ENCODE measurements at regions of chr2 and their contacts with region 1.

Region 1: DNA sequence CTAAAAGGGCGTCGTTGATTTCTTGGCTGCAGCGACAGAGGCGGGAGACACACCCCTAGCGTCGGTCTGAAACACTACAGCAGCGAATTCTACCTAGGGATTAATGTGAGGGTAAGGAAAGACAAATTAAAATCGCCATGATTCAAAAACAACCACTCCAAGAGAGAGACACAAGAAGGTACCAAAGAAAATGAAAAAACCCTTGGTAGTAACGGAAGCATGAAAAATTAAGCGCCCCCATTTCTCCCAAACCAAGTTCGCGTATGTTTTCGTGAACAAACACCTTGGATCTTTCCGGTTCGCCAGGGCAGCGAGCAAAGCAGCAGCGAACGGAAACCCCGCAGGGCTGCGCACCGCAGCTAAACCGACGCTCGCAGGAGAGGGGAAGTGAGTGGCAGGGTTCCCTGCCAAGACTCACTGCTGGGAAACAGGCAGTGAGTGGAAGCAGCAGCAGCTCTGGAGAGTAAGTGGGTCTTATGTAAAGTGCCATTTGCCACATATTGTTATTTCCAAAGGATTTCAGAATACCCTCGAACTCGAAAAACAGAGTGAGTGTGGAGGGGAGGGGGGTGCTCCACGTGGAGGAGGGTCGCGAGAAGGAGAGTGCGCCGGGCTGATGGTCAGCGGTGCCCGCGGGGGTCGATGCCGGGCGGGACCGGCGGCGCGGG is 1.0 kb downstream of the PPP3R1 start:
- DNase-seq: peak; percentile 92
- H3K4me3 Mint-ChIP-seq: peak overlapping the region; percentile 92
- H3K27ac Mint-ChIP-seq: peak overlapping the region; percentile 99
- H3K4me1 Mint-ChIP-seq: peaks cover 37% of the 10 kb centered on the region
- H3K27me3 Mint-ChIP-seq: peaks cover 4% of the 10 kb centered on the region

Region 2: GRCh38 chr2:67397143-67397986 is 854.0 kb before region 1 on chr2 and contains the start of gene ETAA1:
- intact Hi-C with region 1: loop called (anchors 5 kb)
- DNase-seq: peak; percentile 98
- H3K4me3 Mint-ChIP-seq: peak within 1 kb of the TSS; percentile 97
- H3K27ac Mint-ChIP-seq: peak within 1 kb of the TSS; percentile 97
- H3K4me1 Mint-ChIP-seq: peaks cover 8% of the 10 kb centered on the region
- H3K27me3 Mint-ChIP-seq: peaks cover 2% of the 10 kb centered on the region
- total RNA-seq, gene ETAA1: 10.8 and 12.0 TPM in 2 replicates

Region 3: DNA sequence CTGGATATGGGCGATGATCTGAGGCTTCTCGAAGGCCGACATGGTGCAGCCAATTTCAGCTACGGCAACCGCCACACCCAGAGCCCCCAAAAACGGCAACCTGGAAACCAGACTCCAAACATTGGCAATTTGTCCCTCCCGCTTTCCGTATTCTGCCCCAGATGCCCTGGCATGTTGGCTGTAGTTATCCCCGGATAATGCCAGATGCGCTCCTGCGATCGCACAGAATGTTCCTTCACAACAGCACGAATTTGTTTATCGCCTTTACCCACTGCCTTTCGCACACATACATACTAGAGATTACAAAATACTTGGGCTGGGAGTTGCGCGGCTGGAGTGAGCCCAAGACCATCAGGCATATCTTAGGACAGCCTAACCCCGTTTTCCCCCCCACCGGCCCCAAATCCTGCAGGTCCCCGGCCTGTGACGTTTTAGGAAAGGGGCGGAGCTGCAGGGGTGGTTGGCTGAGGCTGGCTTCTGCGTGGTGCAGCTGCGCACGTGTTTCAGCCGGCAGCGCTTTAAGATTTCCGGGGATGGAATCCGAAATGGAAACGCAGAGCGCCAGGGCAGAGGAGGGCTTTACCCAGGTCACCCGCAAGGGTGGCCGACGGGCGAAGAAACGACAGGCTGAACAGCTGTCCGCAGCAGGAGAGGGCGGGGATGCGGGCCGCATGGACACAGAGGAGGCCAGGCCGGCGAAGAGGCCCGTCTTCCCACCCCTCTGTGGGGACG is 93.8 kb before region 1 on chr2 and contains the start of gene PNO1:
- intact Hi-C with region 1: loop called (anchors 1 kb)
- DNase-seq: peak; percentile 99
- H3K4me3 Mint-ChIP-seq: peak within 1 kb of the TSS; percentile 98
- H3K27ac Mint-ChIP-seq: peak within 1 kb of the TSS; percentile 99
- H3K4me1 Mint-ChIP-seq: peaks cover 26% of the 10 kb centered on the region
- H3K27me3 Mint-ChIP-seq: no peaks in the 10 kb centered on the region
- total RNA-seq, gene PNO1: 35.4 and 38.4 TPM in 2 replicates

Region 4: GRCh38 chr2:68238955-68239822 is 12.1 kb before region 1 on chr2:
- intact Hi-C with region 1: loop called (anchors 1 kb)
- DNase-seq: no peak
- H3K4me3 Mint-ChIP-seq: peak overlapping the region; percentile 14
- H3K27ac Mint-ChIP-seq: peak overlapping the region; percentile 68
- H3K4me1 Mint-ChIP-seq: peaks cover 47% of the 10 kb centered on the region
- H3K27me3 Mint-ChIP-seq: no peaks in the 10 kb centered on the region

Region 5: GRCh38 chr2:68295516-68295915 is 44.2 kb after region 1 on chr2:
- intact Hi-C with region 1: no loop called
- DNase-seq: no peak
- H3K4me3 Mint-ChIP-seq: no peak overlapping the region
- H3K27ac Mint-ChIP-seq: no peak overlapping the region
- H3K4me1 Mint-ChIP-seq: no peaks in the 10 kb centered on the region
- H3K27me3 Mint-ChIP-seq: peaks cover 13% of the 10 kb centered on the region

Region 6: DNA sequence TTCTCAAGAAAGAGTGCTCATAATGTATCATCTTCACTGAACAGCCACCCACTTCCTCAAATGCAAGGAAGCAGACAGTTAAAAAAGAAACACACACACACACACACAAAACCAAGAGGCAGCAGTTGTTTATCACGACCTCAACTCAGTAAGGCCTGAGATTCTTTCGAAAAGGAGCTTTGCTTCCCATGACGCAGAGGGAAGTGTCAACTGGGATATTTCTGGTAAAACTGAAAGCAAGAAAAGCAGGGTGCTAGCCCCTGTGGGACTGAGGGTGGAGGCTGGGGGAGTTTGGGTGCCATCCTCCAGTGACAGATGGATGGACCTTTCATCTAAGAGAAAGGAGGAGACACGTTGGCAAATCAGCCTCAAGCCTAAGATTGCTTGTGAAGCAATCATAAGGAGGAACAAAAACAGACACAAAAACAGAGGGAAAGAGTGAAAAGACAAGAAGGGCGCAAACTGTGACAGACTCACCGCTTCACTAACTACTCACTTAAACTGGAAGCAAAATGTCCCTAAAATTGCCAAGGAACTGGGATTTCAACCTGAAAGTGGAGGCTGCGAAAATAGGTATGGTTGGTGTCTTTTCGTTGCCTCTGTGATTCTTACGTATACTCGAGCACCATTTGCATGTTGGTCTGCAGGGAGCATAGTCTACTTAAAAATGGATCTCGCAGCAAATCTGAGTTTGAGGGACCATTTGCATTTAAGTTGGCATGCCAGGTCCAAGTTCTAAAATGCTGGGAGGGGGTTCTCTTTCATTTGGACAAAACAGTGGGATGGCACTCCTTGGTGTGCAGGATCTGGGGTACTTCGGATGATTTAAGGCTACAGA is 483.6 kb after region 1 on chr2 and contains the start of gene ARHGAP25:
- intact Hi-C with region 1: loop called (anchors 10 kb)
- DNase-seq: peak; percentile 89
- H3K4me3 Mint-ChIP-seq: no peak within 1 kb of the TSS
- H3K27ac Mint-ChIP-seq: no peak within 1 kb of the TSS
- H3K4me1 Mint-ChIP-seq: peaks cover 41% of the 10 kb centered on the region
- H3K27me3 Mint-ChIP-seq: no peaks in the 10 kb centered on the region
- total RNA-seq, gene ARHGAP25: 37.8 and 42.2 TPM in 2 replicates

Measured in activated CD4-positive, alpha-beta T cell treated with anti-CD3 and anti-CD28 coated beads, Interleukin-2, amount 10 ng/mL, durations not matched to agents 24 days and 14 days (primary cell).